ENCODE measurements at regions of chr3 and their contacts with region 1.

Region 1: DNA sequence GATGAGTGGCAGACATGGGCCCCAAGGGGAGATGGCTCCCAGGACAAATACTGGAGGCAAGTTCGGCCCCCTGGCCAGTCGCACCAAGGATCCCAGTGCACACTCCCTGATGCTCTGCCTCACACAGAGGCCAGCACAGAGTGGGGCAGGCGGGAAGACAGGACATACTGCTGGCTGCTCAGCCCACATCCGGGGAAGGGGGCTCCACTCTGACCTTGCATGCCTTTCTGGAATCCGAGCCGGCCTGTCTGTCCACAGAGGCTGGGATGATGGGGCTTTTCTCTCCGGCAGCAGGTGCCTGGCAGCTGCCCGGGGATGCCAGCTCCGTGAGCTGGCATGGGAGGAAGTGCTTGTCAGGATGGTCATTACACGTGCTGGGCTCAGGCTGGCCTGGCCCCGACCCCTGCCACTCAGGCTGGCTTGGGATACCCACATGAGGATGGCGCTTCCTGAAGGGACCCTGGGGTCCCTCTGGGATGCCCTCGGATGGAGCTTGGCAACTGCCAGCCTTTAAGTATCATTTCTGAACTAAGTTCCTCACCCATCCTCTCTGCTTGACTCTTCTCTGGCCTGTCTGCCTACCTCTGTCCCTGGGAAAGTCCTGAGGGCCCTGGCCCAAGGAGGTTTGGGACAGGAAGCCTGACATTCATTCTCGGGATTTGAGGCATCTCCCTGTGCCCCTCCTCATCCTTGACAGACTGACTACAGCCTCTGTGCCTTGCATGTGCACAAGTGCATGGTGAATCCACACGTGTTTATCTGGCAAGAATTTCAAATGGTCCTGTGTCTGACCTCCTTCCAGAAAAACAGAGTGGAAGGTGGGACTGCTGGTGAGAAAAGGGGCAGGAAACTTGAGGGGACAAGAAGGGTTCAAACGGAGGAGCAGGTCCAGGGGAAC is 46.5 kb downstream of the EXOG start:
- DNase-seq: peak; percentile 74
- ATAC-seq: peak; percentile 79 to 88 (median 82)
- H3K4me3 ChIP-seq: peak overlapping the region; percentile 4
- H3K27ac ChIP-seq: peak overlapping the region; percentile 85
- H3K4me1 ChIP-seq: peaks cover 25% of the 10 kb centered on the region
- H3K27me3 ChIP-seq: no peaks in the 10 kb centered on the region
- CTCF ChIP-seq: no peak

Region 2: DNA sequence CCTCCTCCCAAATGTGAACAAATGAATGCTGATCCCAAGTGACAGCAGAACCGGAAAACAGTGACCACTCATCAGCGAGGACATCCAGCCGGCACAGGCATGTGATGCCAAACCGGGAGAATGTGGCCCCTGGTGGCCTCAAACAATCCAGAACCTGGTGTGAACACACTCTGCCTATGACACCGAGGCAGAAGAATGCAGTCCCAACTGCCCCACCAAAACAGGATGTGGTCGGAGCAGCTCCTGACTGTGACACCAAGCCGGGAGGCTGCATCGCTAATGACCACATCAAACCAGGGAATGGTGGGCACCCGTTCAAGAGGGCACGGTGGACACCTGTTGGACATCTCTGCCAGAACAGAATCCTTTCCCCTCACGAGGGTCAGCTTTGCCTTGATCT is 91.5 kb after region 1 on chr3:
- intact Hi-C with region 1: loop called in 1 of 2 experiments (anchors 5 kb)
- DNase-seq: peak; percentile 39 to 58
- ATAC-seq: peak; percentile 38 to 93 (median 89)
- H3K4me3 ChIP-seq: no peak overlapping the region
- H3K27ac ChIP-seq: no peak overlapping the region
- H3K4me1 ChIP-seq: no peaks in the 10 kb centered on the region
- H3K27me3 ChIP-seq: peaks cover 0 to 13% (median 9%) of the 10 kb centered on the region in 3 donors
- CTCF ChIP-seq: no peak

Measured in psoas muscle (tissue), 8 donors.